Heart left ventricle (tissue), 16 donors: ENCODE measurements at regions of chr10 and their contacts with region 1.

Region 1: GRCh38 chr10:28241741-28242399 is 61.0 kb downstream of the MPP7 start:
- DNase-seq: no peak
- ATAC-seq: peak; percentile 51 to 76 (median 66)
- H3K4me3 ChIP-seq: no peak overlapping the region
- H3K27ac ChIP-seq: no peak overlapping the region
- H3K4me1 ChIP-seq: peaks cover 0 to 9% (median 0%) of the 10 kb centered on the region in 12 donors
- H3K27me3 ChIP-seq: no peaks in the 10 kb centered on the region
- CTCF ChIP-seq: peak; percentile 86 to 95 (median 92)
- POLR2A ChIP-seq: no peak

Region 2: GRCh38 chr10:27446091-27446918 is 795.6 kb before region 1 on chr10:
- intact Hi-C with region 1: loop called in 9 of 10 experiments (anchors 5 to 10 kb)
- DNase-seq: no peak
- ATAC-seq: peak in 1 of 4 donors; percentile 33
- H3K4me3 ChIP-seq: no peak overlapping the region
- H3K27ac ChIP-seq: no peak overlapping the region
- H3K4me1 ChIP-seq: peaks cover 0 to 23% (median 0%) of the 10 kb centered on the region in 12 donors
- H3K27me3 ChIP-seq: no peaks in the 10 kb centered on the region
- CTCF ChIP-seq: peak; percentile 23 to 57 (median 43)
- POLR2A ChIP-seq: no peak

Region 3: DNA sequence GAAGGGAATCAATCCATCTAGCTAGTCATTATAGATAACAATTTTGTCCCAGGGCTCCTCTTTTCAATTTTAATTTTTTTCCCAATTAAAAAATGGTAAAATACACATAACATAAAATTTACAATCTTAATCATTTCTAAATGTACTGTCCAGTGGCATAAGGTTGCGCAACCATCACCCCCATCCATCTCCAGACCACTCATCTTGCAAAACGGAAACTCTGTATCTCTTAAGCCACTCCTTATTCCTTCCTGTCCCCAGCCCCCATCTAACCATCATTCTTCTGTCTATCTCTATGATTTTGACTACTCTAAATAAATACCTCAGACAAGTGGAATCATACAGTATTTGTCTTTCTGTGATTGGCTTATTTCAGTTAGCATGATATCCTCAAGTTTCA is 783.9 kb before region 1 on chr10:
- intact Hi-C with region 1: loop called in 1 of 10 experiments (anchors 10 kb)
- DNase-seq: no peak
- ATAC-seq: no peak
- H3K4me3 ChIP-seq: no peak overlapping the region
- H3K27ac ChIP-seq: no peak overlapping the region
- H3K4me1 ChIP-seq: no peaks in the 10 kb centered on the region
- H3K27me3 ChIP-seq: peaks cover 0 to 27% (median 0%) of the 10 kb centered on the region in 9 donors
- CTCF ChIP-seq: no peak
- POLR2A ChIP-seq: no peak

Region 4: DNA sequence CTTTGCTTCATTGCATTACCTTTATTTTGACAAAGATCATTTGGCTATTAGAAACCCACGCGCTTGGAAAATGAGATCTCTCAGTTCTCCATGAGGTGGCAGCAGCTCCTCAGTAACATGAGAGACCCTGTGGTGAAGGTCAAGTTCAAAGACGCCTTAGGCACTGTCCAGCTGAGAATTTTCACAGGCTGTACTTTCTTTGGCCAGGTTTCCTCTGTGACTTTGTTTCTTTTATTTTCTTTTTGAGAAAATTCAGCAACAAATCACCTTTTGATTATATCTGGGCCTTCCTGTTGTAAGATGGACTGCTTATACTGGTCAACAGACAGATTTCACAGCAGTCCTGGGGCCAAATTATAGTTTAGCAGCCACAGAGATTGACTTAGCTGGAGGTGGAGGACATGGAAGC is 683.3 kb before region 1 on chr10:
- intact Hi-C with region 1: loop called in 7 of 10 experiments (anchors 1 to 10 kb)
- DNase-seq: peak in 4 of 5 donors; percentile 37 to 57 (median 42)
- ATAC-seq: peak; percentile 71 to 89 (median 86)
- H3K4me3 ChIP-seq: no peak overlapping the region
- H3K27ac ChIP-seq: no peak overlapping the region
- H3K4me1 ChIP-seq: peaks cover 0 to 4% (median 0%) of the 10 kb centered on the region in 12 donors
- H3K27me3 ChIP-seq: no peaks in the 10 kb centered on the region
- CTCF ChIP-seq: peak; percentile 51 to 81 (median 66)
- POLR2A ChIP-seq: no peak

Region 5: DNA sequence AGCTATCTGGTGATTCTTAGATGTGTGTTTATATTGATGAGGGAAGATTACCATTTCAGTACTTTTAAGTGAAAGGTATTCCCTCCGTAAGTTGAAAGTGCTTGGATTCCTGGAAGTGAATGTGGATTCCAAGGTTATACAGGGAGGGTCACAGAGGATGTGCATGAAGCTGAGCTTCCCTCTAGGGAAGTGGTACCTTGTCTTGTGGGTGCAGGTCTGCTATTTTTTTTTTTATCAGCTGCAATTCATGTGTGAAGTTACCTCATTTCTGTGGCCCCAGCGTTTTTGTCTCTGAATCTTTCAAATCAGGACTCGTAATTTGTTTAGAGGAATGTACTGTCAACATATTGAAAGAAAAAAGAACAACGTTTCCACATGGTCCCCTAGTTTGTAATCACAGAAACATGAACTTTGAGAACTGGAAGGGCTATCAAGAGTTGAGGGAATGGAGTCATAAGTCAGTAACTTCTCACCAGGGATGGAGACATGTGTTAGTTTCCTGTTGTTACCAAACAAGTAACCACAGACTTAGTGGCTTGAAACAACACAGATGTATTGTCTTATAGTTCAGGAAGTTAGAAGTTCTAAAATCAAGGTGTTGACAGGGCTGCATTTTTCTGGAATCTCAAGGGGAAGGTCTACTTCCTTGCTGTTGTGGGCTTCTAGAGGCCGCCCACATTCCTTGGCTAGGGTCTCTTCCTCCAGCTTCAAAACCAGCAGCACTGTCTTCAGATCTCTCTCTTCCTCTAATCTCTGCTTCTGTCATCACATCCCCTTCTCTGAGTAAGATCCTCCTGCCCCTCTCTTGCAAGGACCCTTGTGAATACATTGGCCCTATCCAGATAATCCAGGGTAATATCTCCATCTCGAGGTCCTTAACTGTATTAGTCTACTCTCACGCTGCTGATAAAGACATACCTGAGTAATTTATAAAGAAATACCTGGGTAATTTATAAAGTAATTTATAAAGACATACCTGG is 673.4 kb before region 1 on chr10:
- intact Hi-C with region 1: loop called in 1 of 10 experiments (anchors 10 kb)
- DNase-seq: no peak
- ATAC-seq: peak; percentile 35 to 71 (median 50)
- H3K4me3 ChIP-seq: no peak overlapping the region
- H3K27ac ChIP-seq: no peak overlapping the region
- H3K4me1 ChIP-seq: peaks cover 0 to 15% (median 0%) of the 10 kb centered on the region in 12 donors
- H3K27me3 ChIP-seq: no peaks in the 10 kb centered on the region
- CTCF ChIP-seq: no peak
- POLR2A ChIP-seq: no peak

Region 6: DNA sequence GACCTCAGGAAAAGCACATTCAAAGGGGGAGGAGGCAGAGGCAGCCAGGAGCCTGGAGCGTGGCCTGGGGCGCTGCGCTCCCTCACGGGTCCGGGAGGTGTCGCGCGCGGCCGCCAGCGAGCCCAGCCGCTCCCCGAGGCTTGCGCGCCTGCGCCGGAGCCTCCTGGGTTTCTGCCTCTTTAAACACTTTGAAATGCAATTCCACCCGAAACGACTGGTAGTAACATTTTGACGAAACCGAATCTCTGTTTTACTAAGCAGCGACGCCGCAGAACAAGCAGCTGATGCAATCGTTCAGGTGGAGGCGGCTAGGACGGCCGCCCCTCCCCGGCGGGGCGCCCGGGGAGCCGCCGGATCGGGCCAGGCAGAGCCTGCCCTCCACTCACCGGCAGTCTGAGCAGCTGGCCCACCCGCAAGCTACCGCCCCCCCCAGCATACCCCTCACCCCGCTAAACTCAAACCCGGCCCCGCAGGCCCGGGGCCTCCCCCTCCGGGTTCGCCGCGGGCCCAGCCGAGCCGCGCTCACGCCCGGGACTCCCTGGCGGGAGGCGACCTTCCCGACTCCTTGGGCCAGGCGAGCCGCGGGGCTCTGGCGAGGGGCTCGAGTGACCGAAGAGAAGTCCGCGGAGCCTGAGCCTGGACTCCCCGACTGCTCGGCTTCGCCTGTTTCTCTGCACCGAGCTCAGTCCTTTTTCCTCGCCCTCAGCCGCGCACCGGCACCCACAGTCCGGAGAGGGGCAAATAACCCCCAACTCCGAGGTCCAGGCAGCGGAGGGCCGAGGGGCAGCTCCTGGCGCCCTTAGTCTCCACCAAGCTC is 499.5 kb before region 1 on chr10:
- intact Hi-C with region 1: loop called in 8 of 10 experiments (anchors 2 to 10 kb)
- DNase-seq: peak; percentile 59 to 86 (median 71)
- ATAC-seq: peak; percentile 66 to 96 (median 90)
- H3K4me3 ChIP-seq: peak overlapping the region; percentile 46 to 77 (median 66)
- H3K27ac ChIP-seq: peak overlapping the region in 8 of 12 donors; percentile 27 to 95 (median 47)
- H3K4me1 ChIP-seq: peaks cover 0 to 59% (median 38%) of the 10 kb centered on the region in 12 donors
- H3K27me3 ChIP-seq: peaks cover 28 to 84% (median 59%) of the 10 kb centered on the region in 9 donors
- CTCF ChIP-seq: peak; percentile 52 to 90 (median 75)
- POLR2A ChIP-seq: no peak

Region 7: GRCh38 chr10:28317760-28318159 is 75.9 kb after region 1 on chr10:
- intact Hi-C with region 1: no loop called
- DNase-seq: no peak
- ATAC-seq: no peak
- H3K4me3 ChIP-seq: no peak overlapping the region
- H3K27ac ChIP-seq: no peak overlapping the region
- H3K4me1 ChIP-seq: no peaks in the 10 kb centered on the region
- H3K27me3 ChIP-seq: peaks cover 0 to 2% (median 0%) of the 10 kb centered on the region in 9 donors
- CTCF ChIP-seq: no peak
- POLR2A ChIP-seq: no peak